Left cardiac atrium (tissue), 4 donors: ENCODE measurements at regions of chr7 and their contacts with region 1.

Region 1: GRCh38 chr7:112495810-112496462 is 15.1 kb downstream of the LSMEM1 start:
- DNase-seq: peak; percentile 41
- ATAC-seq: peak; percentile 84 to 85

Region 2: GRCh38 chr7:111752022-111752582 is 743.8 kb before region 1 on chr7:
- intact Hi-C with region 1: loop called in 1 of 2 experiments (anchors 10 kb)
- DNase-seq: peak; percentile 42
- ATAC-seq: peak in 1 of 2 donors; percentile 42

Region 3: DNA sequence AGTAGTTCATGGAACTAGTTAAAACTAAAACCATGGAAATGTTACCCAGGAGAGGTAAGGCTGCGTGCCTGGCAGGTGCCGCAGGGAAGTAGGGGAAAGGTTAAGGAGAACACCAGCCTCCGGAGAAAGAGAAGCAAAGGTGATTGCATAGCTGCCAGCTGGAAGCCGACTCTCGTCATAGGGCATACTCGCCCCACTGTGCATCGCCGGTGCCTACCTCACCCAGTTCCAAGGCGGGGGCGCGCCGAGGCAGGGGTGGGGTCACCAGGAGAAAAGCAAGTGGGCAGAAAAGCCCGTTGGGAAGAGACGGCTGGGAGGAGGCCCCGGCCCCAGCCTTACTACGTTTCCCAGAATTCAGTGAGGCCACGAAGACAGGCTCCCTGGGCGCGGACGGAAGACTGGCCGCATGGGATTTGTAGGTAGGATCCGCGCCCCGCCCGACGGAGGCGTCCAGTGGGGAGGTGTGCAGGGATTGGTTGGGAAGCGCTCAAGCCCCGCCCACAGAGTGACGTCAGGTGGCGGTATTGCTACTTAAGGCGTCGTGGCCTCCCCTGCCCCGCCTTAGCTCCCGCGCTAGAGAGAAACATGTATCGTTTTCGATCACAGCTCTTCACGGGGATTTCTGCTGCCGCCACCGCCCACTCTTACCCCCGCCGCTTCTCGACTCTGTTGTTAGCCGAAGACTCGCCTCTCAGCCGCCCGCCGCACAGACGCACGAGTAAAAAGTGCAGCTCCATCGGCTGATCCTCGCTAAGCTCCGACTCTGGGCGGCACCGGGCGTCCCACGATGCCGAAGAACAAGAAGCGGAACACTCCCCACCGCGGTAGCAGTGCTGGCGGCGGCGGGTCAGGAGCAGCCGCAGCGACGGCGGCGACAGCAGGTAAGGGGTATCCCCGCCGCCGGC is 45.8 kb before region 1 on chr7 and contains the start of gene IFRD1:
- intact Hi-C with region 1: loop called in 1 of 2 experiments (anchors 5 kb)
- DNase-seq: peak; percentile 99
- ATAC-seq: peak; percentile 91 to 96
- total RNA-seq, gene IFRD1: 22.2 to 42.2 TPM